CD8-positive, alpha-beta T cell (primary cell): ENCODE measurements at regions of chr14 and their contacts with region 1.

Region 1: GRCh38 chr14:59189786-59190771 is 1.6 kb downstream of the DAAM1 start:
- DNase-seq: peak; percentile 37 to 87 (median 66)
- ATAC-seq: no peak
- H3K4me3 ChIP-seq: peak overlapping the region; percentile 63 to 94
- H3K4me3 Mint-ChIP-seq: peak overlapping the region; percentile 98
- H3K27ac ChIP-seq: peak overlapping the region; percentile 76 to 87
- H3K27ac Mint-ChIP-seq: peak overlapping the region; percentile 98
- H3K4me1 ChIP-seq: peaks cover 14% of the 10 kb centered on the region
- H3K4me1 Mint-ChIP-seq: peaks cover 17% of the 10 kb centered on the region
- H3K27me3 ChIP-seq: no peaks in the 10 kb centered on the region
- H3K27me3 Mint-ChIP-seq: no peaks in the 10 kb centered on the region
- CTCF ChIP-seq: no peak

Region 2: GRCh38 chr14:57268161-57269069 is 1921.7 kb before region 1 on chr14 and contains the starts of genes AP5M1 and EXOC5:
- CTCF ChIA-PET with region 1: no interaction called
- POLR2A ChIA-PET with region 1: no interaction called
- intact Hi-C with region 1: loop called (anchors 5 to 10 kb)
- DNase-seq: peak; percentile 80 to 97 (median 91)
- ATAC-seq: peak; percentile 80
- H3K4me3 ChIP-seq: peak within 1 kb of the TSS; percentile 77 to 84
- H3K4me3 Mint-ChIP-seq: peak within 1 kb of the TSS; percentile 99
- H3K27ac ChIP-seq: peak within 1 kb of the TSS; percentile 85 to 90
- H3K27ac Mint-ChIP-seq: peak within 1 kb of the TSS; percentile 100
- H3K4me1 ChIP-seq: peaks cover 35% of the 10 kb centered on the region
- H3K4me1 Mint-ChIP-seq: peaks cover 70% of the 10 kb centered on the region
- H3K27me3 ChIP-seq: no peaks in the 10 kb centered on the region
- H3K27me3 Mint-ChIP-seq: no peaks in the 10 kb centered on the region
- CTCF ChIP-seq: no peak
- total RNA-seq, gene AP5M1: 38.5 to 42.4 TPM
- total RNA-seq, gene EXOC5: 17.0 to 17.8 TPM

Region 3: DNA sequence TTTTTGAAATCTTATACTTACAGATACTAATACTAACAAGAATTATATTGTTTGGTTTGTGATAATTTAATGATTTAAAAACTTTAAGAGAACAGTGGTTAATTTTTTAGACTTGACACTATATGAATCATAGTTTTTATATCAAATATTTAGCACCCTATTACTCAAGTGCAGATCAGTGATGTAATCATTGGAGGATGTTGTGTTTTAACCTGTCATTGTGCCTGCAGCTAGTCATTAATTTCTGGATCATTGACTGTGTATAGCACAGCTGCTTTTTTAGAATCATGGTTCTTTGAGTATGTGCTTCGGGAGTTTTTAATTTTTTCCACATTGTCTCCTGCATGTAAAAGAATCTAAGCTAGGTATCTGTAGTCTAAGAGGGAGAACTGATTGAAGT is 874.5 kb before region 1 on chr14:
- CTCF ChIA-PET with region 1: no interaction called
- POLR2A ChIA-PET with region 1: no interaction called
- intact Hi-C with region 1: loop called in 1 of 2 experiments (anchors 10 kb)
- DNase-seq: no peak
- ATAC-seq: no peak
- H3K4me3 ChIP-seq: no peak overlapping the region
- H3K4me3 Mint-ChIP-seq: no peak overlapping the region
- H3K27ac ChIP-seq: no peak overlapping the region
- H3K27ac Mint-ChIP-seq: no peak overlapping the region
- H3K4me1 ChIP-seq: no peaks in the 10 kb centered on the region
- H3K4me1 Mint-ChIP-seq: peaks cover 9% of the 10 kb centered on the region
- H3K27me3 ChIP-seq: no peaks in the 10 kb centered on the region
- H3K27me3 Mint-ChIP-seq: no peaks in the 10 kb centered on the region
- CTCF ChIP-seq: no peak

Region 4: GRCh38 chr14:59464486-59465315 is 274.6 kb after region 1 on chr14:
- CTCF ChIA-PET with region 1: interaction called, 5 read pairs
- POLR2A ChIA-PET with region 1: no interaction called
- intact Hi-C with region 1: loop called (anchors 1 to 5 kb)
- DNase-seq: peak; percentile 15 to 77 (median 55)
- ATAC-seq: peak; percentile 69
- H3K4me3 ChIP-seq: peak overlapping the region; percentile 50 to 56
- H3K4me3 Mint-ChIP-seq: peak overlapping the region; percentile 90
- H3K27ac ChIP-seq: peak overlapping the region in 1 of 2 experiments; percentile 42
- H3K27ac Mint-ChIP-seq: peak overlapping the region; percentile 58
- H3K4me1 ChIP-seq: peaks cover 9% of the 10 kb centered on the region
- H3K4me1 Mint-ChIP-seq: peaks cover 11% of the 10 kb centered on the region
- H3K27me3 ChIP-seq: no peaks in the 10 kb centered on the region
- H3K27me3 Mint-ChIP-seq: peaks cover 5% of the 10 kb centered on the region
- CTCF ChIP-seq: no peak

Region 5: DNA sequence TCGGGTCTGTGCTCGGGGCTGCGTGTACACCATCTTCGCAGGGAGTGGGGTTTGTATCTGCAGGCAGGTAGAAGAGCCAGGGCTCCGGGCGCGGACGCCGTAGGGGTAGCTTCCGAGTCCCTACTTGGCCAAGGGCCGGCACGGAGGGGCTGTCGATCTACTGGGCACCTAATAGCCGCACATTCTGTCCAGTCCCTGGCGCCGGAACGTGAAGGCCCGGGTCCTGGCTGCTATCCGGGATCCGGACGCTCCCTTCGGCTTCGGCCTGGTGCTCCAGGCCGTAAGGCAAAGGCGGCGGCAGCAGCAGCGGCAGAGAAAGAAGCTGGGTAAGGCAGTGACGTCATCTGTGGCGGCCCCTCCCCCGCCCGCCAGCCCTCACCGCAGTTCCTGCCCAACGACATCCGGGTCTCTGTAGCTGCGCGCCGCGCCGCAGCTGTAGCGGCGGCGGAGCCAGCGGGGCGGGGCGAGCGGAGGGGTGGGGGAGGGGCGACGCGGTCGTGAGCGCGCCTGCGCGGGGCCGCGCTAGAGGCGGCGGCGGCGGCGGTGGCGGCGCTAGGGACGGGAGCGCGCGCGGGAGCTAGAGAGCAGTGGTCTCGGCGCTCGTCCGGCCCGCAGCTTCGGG is 1058.7 kb after region 1 on chr14 and contains the start of gene PPM1A:
- CTCF ChIA-PET with region 1: no interaction called
- POLR2A ChIA-PET with region 1: interaction called, 7 read pairs
- intact Hi-C with region 1: loop called (anchors 2 kb)
- DNase-seq: peak; percentile 93 to 99 (median 96)
- ATAC-seq: peak; percentile 76
- H3K4me3 ChIP-seq: peak within 1 kb of the TSS; percentile 92
- H3K4me3 Mint-ChIP-seq: peak within 1 kb of the TSS; percentile 93
- H3K27ac ChIP-seq: peak within 1 kb of the TSS; percentile 99 to 100
- H3K27ac Mint-ChIP-seq: peak within 1 kb of the TSS; percentile 100
- H3K4me1 ChIP-seq: peaks cover 41% of the 10 kb centered on the region
- H3K4me1 Mint-ChIP-seq: peaks cover 48% of the 10 kb centered on the region
- H3K27me3 ChIP-seq: no peaks in the 10 kb centered on the region
- H3K27me3 Mint-ChIP-seq: no peaks in the 10 kb centered on the region
- CTCF ChIP-seq: no peak
- total RNA-seq, gene PPM1A: 114 to 115 TPM

Region 6: DNA sequence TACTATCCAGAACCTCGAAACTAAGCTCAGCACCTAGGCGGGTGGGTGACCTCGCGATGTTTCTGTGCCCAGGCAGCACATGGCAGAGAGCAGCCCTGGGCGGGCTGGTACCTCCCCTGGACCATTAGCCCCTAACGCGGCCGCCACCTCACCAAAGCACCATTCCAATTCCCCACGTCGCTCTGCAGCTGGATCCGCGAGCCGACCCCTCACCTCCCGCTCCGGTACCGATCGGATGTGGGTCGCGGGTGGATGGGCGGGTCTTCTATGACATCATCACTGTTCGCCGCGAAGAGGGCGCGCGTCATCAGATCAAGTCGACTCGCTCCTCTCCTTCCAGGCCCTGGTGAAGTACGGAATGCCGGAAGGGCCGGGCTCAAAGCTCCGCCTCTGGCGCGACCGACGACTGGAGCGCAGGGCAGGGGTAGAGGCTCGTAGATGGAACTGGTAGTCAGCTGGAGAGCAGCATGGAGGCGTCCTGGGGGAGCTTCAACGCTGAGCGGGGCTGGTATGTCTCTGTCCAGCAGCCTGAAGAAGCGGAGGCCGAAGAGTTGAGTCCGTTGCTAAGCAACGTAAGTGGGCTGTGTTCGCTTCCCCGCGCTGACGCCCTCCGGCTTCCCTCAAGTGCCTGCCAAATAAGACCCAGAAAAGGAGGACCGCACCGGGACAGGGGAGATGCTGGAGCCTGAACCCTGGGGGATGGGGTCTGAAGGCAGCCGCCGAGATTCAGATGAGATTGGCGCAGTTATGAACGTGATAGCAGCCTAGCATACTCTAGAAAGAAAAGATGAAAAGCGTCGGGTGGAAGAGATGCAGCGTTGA is 1790.9 kb after region 1 on chr14 and contains the starts of genes SLC38A6 and TRMT5:
- CTCF ChIA-PET with region 1: no interaction called
- POLR2A ChIA-PET with region 1: no interaction called
- intact Hi-C with region 1: loop called in 1 of 2 experiments (anchors 10 kb)
- DNase-seq: peak; percentile 79 to 94 (median 91)
- ATAC-seq: peak; percentile 88
- H3K4me3 ChIP-seq: peak within 1 kb of the TSS; percentile 94 to 98
- H3K4me3 Mint-ChIP-seq: no peak within 1 kb of the TSS
- H3K27ac ChIP-seq: peak within 1 kb of the TSS; percentile 90 to 92
- H3K27ac Mint-ChIP-seq: no peak within 1 kb of the TSS
- H3K4me1 ChIP-seq: peaks cover 23% of the 10 kb centered on the region
- H3K4me1 Mint-ChIP-seq: peaks cover 25% of the 10 kb centered on the region
- H3K27me3 ChIP-seq: no peaks in the 10 kb centered on the region
- H3K27me3 Mint-ChIP-seq: no peaks in the 10 kb centered on the region
- CTCF ChIP-seq: no peak
- total RNA-seq, gene SLC38A6: 8.3 to 8.5 TPM
- total RNA-seq, gene TRMT5: 1.8 to 1.9 TPM